ENCODE measurements at regions of chr6 and their contacts with region 1.

Region 1: GRCh38 chr6:24359640-24360454 is 2.0 kb upstream of the DCDC2 start:
- DNase-seq: peak; percentile 90
- ATAC-seq: peak; percentile 85
- H3K4me3 ChIP-seq: peak overlapping the region in 4 of 5 experiments; percentile 17 to 68 (median 50)
- H3K4me3 Mint-ChIP-seq: peak overlapping the region; percentile 84
- H3K27ac ChIP-seq: no peak overlapping the region
- H3K27ac Mint-ChIP-seq: peak overlapping the region; percentile 81
- H3K4me1 ChIP-seq: peaks cover 9 to 23% of the 10 kb centered on the region in 2 donors
- H3K4me1 Mint-ChIP-seq: peaks cover 26% of the 10 kb centered on the region
- H3K27me3 ChIP-seq: peaks cover 0 to 20% (median 4%) of the 10 kb centered on the region in 4 experiments
- H3K27me3 Mint-ChIP-seq: peaks cover 16% of the 10 kb centered on the region
- CTCF ChIP-seq: peak; percentile 85

Region 2: DNA sequence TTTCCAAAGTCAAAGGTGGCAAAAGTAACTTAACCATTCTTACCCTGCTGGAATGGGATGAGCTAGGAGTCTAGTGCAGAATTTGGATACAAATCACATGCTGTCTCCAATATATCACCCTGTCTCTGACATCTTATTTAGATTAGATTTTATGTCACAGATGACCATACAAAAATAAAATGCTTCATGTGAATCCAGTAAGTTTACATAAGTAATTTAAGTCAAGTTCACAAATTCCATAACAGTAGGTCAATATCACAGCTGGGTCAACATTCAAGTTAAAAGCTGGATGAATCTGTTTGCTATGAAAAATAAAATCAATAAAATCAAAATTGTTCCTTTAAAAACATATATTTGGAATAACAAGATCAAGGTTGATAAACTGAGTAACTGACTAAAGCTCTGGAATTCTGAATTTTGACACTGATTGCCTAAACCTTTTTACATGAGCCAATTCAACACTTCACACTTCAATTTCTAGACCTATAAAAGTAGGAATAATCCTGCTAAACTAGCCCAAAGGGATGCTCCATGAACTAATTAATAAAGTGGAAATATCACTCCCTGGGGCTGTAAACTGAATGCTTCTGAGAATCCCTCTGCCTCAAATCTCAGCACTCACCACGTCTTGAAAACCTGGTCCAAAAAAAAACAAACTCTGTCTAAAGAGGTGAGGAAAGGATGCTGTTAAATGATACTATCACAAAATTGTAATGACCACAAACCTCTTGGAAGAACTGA is 53.1 kb before region 1 on chr6:
- CTCF ChIA-PET with region 1: no interaction called
- POLR2A ChIA-PET with region 1: no interaction called
- intact Hi-C with region 1: loop called (anchors 2 kb)
- DNase-seq: no peak
- ATAC-seq: no peak
- H3K4me3 ChIP-seq: no peak overlapping the region
- H3K4me3 Mint-ChIP-seq: no peak overlapping the region
- H3K27ac ChIP-seq: no peak overlapping the region
- H3K27ac Mint-ChIP-seq: no peak overlapping the region
- H3K4me1 ChIP-seq: no peaks in the 10 kb centered on the region
- H3K4me1 Mint-ChIP-seq: no peaks in the 10 kb centered on the region
- H3K27me3 ChIP-seq: peaks cover 0 to 4% (median 0%) of the 10 kb centered on the region in 4 experiments
- H3K27me3 Mint-ChIP-seq: peaks cover 14% of the 10 kb centered on the region
- CTCF ChIP-seq: no peak

Measured in B cell (primary cell).